CD4-positive, alpha-beta memory T cell (primary cell): ENCODE measurements at regions of chr7 and their contacts with region 1.

Region 1: GRCh38 chr7:111741811-111742240 is 179.5 kb upstream of the IMMP2L start:
- DNase-seq: peak in 4 of 5 donors; percentile 40 to 44 (median 42)
- H3K4me3 ChIP-seq: no peak overlapping the region
- H3K4me3 Mint-ChIP-seq: no peak overlapping the region
- H3K27ac ChIP-seq: no peak overlapping the region
- H3K27ac Mint-ChIP-seq: no peak overlapping the region
- H3K4me1 ChIP-seq: no peaks in the 10 kb centered on the region
- H3K4me1 Mint-ChIP-seq: peaks cover 0 to 2% (median under 1%) of the 10 kb centered on the region in 4 donors
- H3K27me3 ChIP-seq: no peaks in the 10 kb centered on the region
- H3K27me3 Mint-ChIP-seq: peaks cover 7 to 14% of the 10 kb centered on the region in 2 donors

Region 2: GRCh38 chr7:111730476-111731300 is 11.1 kb before region 1 on chr7:
- CTCF ChIA-PET with region 1: interaction called, 33 read pairs
- POLR2A ChIA-PET with region 1: no interaction called
- intact Hi-C with region 1: no loop called
- DNase-seq: no peak
- H3K4me3 ChIP-seq: no peak overlapping the region
- H3K4me3 Mint-ChIP-seq: no peak overlapping the region
- H3K27ac ChIP-seq: no peak overlapping the region
- H3K27ac Mint-ChIP-seq: no peak overlapping the region
- H3K4me1 ChIP-seq: no peaks in the 10 kb centered on the region
- H3K4me1 Mint-ChIP-seq: no peaks in the 10 kb centered on the region
- H3K27me3 ChIP-seq: no peaks in the 10 kb centered on the region
- H3K27me3 Mint-ChIP-seq: peaks cover 5 to 6% of the 10 kb centered on the region in 2 donors

Region 3: GRCh38 chr7:112414855-112415490 is 673.1 kb after region 1 on chr7:
- CTCF ChIA-PET with region 1: interaction called, 7 read pairs
- POLR2A ChIA-PET with region 1: no interaction called
- intact Hi-C with region 1: loop called (anchors 1 kb)
- DNase-seq: peak in 1 of 5 donors; percentile 21
- H3K4me3 ChIP-seq: no peak overlapping the region
- H3K4me3 Mint-ChIP-seq: peak overlapping the region in 1 of 8 donors; percentile 2
- H3K27ac ChIP-seq: no peak overlapping the region
- H3K27ac Mint-ChIP-seq: no peak overlapping the region
- H3K4me1 ChIP-seq: no peaks in the 10 kb centered on the region
- H3K4me1 Mint-ChIP-seq: peaks cover 0 to 4% (median 2%) of the 10 kb centered on the region in 4 donors
- H3K27me3 ChIP-seq: peaks cover 3% of the 10 kb centered on the region
- H3K27me3 Mint-ChIP-seq: peaks cover 0 to 9% of the 10 kb centered on the region in 2 donors

Region 4: DNA sequence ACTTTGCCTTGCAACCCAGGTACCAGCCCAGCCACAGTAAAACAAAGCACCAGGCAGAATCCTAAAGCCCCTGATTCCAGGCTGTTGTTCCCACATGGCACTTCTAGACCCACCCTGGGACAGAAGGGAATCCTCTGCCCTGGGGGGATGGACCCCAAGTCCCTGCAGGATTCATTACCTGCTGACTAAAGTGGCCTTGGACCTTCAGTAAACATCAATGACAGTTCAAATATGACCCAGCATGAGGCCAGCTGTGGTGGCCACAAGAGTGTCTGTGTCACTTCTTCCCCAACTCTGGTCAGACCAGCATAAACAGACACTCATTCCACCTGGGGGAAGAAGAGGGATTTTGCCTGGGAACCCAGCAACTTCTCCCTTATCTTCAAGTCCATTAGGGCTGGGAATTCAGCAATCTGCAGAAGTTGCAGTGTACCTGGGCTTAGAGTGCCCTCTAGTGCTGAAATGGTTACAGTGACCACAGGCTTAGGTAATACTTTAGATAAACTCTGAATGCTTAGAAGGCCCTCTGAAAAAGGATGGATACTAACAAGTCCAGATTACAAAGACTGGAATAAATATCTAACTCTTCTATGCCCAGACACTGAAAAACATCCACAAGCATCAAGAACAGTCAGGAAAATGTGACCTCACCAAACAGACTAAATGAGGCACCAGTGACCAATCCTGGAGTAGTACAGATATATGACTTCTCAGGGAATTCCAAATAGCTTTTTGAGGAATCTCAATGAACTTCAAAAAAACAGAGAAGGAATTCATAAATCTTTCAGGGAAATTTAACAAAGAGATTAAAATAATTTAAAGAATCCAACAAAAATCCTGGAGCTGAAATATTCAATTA is 1156.8 kb after region 1 on chr7:
- CTCF ChIA-PET with region 1: interaction called, 4 read pairs
- POLR2A ChIA-PET with region 1: no interaction called
- intact Hi-C with region 1: loop called (anchors 5 kb)
- DNase-seq: peak in 4 of 5 donors; percentile 22 to 32 (median 28)
- H3K4me3 ChIP-seq: no peak overlapping the region
- H3K4me3 Mint-ChIP-seq: no peak overlapping the region
- H3K27ac ChIP-seq: no peak overlapping the region
- H3K27ac Mint-ChIP-seq: no peak overlapping the region
- H3K4me1 ChIP-seq: no peaks in the 10 kb centered on the region
- H3K4me1 Mint-ChIP-seq: peaks cover 7 to 21% (median 13%) of the 10 kb centered on the region in 4 donors
- H3K27me3 ChIP-seq: no peaks in the 10 kb centered on the region
- H3K27me3 Mint-ChIP-seq: no peaks in the 10 kb centered on the region

Region 5: DNA sequence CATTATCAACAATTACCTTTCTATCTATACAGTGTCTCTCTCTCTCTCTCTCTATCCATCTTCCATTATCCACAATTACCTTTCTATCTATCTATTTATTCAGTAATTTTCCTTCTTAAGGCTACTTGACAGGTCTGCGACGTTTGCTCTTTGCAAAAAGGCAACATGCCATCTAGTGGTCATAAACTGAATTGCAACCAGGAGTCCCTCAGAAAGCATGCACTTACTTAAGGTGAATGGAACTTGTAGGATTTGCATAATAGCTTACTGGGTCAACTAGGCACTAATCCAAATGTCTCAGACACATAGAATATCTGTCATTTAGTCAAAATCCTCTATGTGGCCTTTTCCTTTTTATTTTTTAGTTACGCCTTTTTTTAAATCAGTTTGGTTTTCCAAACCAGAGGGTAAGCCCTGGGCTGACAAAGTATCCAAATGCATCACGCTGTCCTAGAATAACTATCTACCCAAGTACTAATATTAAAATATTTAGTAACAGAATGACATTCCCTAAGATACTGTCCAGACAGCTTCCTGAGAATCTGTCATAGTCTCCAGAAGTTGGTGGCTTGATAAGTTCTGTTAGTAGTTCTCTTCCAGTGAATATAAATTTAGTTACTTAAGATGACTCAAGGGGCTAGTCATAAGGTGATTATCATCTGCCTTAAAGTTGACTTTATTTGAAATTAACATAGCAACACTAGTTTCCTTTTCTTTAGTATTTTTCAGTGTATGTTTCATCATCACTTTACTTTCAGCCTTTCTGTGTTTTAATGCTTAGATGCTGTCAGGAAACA is 1968.7 kb after region 1 on chr7:
- CTCF ChIA-PET with region 1: no interaction called
- POLR2A ChIA-PET with region 1: no interaction called
- intact Hi-C with region 1: loop called (anchors 2 kb)
- DNase-seq: peak; percentile 36 to 55 (median 51)
- H3K4me3 ChIP-seq: no peak overlapping the region
- H3K4me3 Mint-ChIP-seq: no peak overlapping the region
- H3K27ac ChIP-seq: no peak overlapping the region
- H3K27ac Mint-ChIP-seq: no peak overlapping the region
- H3K4me1 ChIP-seq: no peaks in the 10 kb centered on the region
- H3K4me1 Mint-ChIP-seq: no peaks in the 10 kb centered on the region
- H3K27me3 ChIP-seq: no peaks in the 10 kb centered on the region
- H3K27me3 Mint-ChIP-seq: peaks cover 0 to 1% of the 10 kb centered on the region in 2 donors